Heart right ventricle (tissue), 16 donors: ENCODE measurements at regions of chr1 and their contacts with region 1.

Region 1: GRCh38 chr1:46527474-46528296 is 23.8 kb downstream of the KNCN start:
- DNase-seq: peak; percentile 80
- ATAC-seq: peak; percentile 73 to 91 (median 84)
- H3K4me3 ChIP-seq: no peak overlapping the region
- H3K27ac ChIP-seq: no peak overlapping the region
- H3K4me1 ChIP-seq: peaks cover 0 to 12% (median 2%) of the 10 kb centered on the region in 9 donors
- H3K27me3 ChIP-seq: peaks cover 0 to 82% (median 70%) of the 10 kb centered on the region in 7 donors
- CTCF ChIP-seq: peak; percentile 81 to 96 (median 91)

Region 2: GRCh38 chr1:46152016-46152415 is 375.7 kb before region 1 on chr1:
- intact Hi-C with region 1: no loop called
- DNase-seq: no peak
- ATAC-seq: peak in 1 of 8 donors; percentile 67
- H3K4me3 ChIP-seq: no peak overlapping the region
- H3K27ac ChIP-seq: no peak overlapping the region
- H3K4me1 ChIP-seq: peaks cover 0 to 14% (median 3%) of the 10 kb centered on the region in 9 donors
- H3K27me3 ChIP-seq: no peaks in the 10 kb centered on the region
- CTCF ChIP-seq: no peak

Region 3: GRCh38 chr1:46406881-46407608 is 120.6 kb before region 1 on chr1:
- intact Hi-C with region 1: loop called in 9 of 10 experiments (anchors 1 to 5 kb)
- DNase-seq: no peak
- ATAC-seq: no peak
- H3K4me3 ChIP-seq: peak overlapping the region in 8 of 10 donors; percentile 5 to 38 (median 26)
- H3K27ac ChIP-seq: no peak overlapping the region
- H3K4me1 ChIP-seq: peaks cover 0 to 20% (median 7%) of the 10 kb centered on the region in 9 donors
- H3K27me3 ChIP-seq: no peaks in the 10 kb centered on the region
- CTCF ChIP-seq: no peak

Region 4: GRCh38 chr1:46442317-46443161 is 85.1 kb before region 1 on chr1:
- intact Hi-C with region 1: loop called (anchors 1 to 5 kb)
- DNase-seq: peak; percentile 72 to 73
- ATAC-seq: peak; percentile 54 to 83 (median 79)
- H3K4me3 ChIP-seq: peak overlapping the region in 9 of 10 donors; percentile 25 to 51 (median 47)
- H3K27ac ChIP-seq: peak overlapping the region in 1 of 10 donors; percentile 50
- H3K4me1 ChIP-seq: peaks cover 0 to 14% (median 3%) of the 10 kb centered on the region in 9 donors
- H3K27me3 ChIP-seq: peaks cover 0 to 28% (median 14%) of the 10 kb centered on the region in 7 donors
- CTCF ChIP-seq: peak; percentile 72 to 93 (median 88)

Region 5: DNA sequence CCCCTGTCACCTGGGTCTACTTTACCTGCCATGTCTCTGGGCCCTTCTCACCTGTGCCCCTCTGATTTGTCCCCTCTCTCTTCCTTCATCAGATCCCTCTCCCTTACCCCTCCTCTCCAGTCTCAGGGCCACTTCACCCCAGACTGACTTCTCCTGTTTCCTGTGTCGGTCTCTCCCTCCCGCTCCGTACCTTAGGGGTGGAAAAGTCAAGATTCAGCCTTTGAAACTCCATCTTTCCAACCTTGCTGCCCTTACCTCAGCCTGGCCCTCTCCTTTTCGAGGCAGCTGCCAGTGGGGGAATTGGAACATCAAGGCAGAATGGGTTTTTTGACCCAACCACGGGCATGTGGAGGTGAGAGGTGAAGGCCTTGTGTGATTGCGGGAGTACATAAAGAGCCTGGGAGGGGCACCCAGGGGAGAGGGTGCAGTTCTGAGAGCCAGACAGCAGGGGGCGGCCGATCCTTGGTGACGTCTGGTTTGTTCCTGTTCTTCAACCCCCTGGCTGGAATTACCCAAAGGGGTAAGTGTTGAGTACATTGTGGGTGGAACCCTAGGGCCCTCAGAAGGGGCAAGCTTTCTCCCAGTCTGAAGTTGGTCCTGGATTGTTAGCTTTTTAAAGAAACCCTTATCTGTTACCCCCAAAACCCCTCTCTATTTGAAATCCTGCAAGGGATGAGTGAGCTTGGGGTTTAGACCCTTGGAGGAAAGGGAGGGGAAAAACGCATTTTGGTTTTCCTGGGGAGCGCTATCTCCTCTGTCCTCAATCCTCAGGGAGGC is 50.3 kb before region 1 on chr1:
- intact Hi-C with region 1: loop called in 7 of 10 experiments (anchors 2 to 5 kb)
- DNase-seq: peak; percentile 51 to 64
- ATAC-seq: peak; percentile 57 to 78 (median 72)
- H3K4me3 ChIP-seq: no peak overlapping the region
- H3K27ac ChIP-seq: no peak overlapping the region
- H3K4me1 ChIP-seq: no peaks in the 10 kb centered on the region
- H3K27me3 ChIP-seq: peaks cover 0 to 86% (median 80%) of the 10 kb centered on the region in 7 donors
- CTCF ChIP-seq: peak; percentile 77 to 93 (median 87)